ENCODE measurements at regions of chrX and their contacts with region 1.

Region 1: GRCh38 chrX:120250522-120251271 is at the start of gene ZBTB33:
- DNase-seq: peak; percentile 92
- ATAC-seq: peak; percentile 99
- H3K4me3 Mint-ChIP-seq: peak within 1 kb of the TSS; percentile 94
- H3K27ac Mint-ChIP-seq: peak within 1 kb of the TSS; percentile 92
- H3K4me1 Mint-ChIP-seq: peaks cover 22% of the 10 kb centered on the region
- H3K27me3 Mint-ChIP-seq: no peaks in the 10 kb centered on the region
- total RNA-seq, gene ZBTB33: 14.5 to 14.6 TPM

Region 2: GRCh38 chrX:120015145-120016067 is 235.3 kb before region 1 on chrX:
- CTCF ChIA-PET with region 1: no interaction called
- POLR2A ChIA-PET with region 1: no interaction called
- intact Hi-C with region 1: no loop called
- DNase-seq: peak; percentile 5
- ATAC-seq: no peak
- H3K4me3 Mint-ChIP-seq: peak overlapping the region; percentile 56
- H3K27ac Mint-ChIP-seq: no peak overlapping the region
- H3K4me1 Mint-ChIP-seq: peaks cover 11% of the 10 kb centered on the region
- H3K27me3 Mint-ChIP-seq: peaks cover 26% of the 10 kb centered on the region

Region 3: DNA sequence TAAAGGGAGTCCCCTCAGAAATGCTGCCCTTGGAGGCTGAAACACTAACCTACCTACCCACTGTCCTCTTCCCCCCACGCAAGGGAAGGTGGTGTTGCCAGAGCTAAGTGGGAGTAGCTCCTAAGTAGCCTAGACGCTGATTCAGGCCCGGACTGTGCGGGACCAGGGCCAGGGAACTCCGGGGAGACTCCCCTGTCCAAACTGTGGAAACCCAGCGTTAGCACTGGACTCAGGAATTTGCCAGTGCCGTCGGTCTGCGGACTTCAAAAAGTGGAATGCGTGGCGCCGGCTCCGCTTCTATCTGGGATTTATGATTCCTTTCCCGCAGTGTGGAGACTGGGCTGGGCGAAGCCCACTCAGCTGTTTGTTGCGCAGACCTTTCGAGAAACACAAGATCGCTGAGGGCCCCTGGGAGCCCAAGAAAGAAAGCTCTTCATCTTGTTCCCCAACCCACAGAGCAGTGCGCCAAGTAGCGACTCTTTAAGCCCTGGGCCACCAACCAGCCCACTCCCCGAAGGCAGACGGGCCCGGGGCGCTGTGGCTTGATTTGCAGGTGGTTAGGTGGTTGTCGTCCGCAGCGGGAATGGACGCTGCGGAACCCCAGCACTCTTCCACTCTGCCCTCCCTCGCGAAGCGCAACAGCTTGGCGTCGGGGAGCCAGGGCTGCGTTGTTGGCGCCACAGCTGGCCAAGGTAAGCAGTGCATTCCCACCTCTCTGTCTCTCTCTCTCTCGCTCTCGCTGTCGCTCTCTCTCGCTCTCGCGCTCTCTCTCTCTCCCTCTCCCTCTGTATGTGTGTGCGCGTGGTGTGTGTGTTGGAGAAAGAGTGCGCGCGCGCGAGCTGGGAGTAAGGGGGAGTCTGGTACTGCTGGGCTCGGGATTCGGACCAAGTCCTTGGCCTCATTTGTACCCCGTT is 58.5 kb after region 1 on chrX:
- CTCF ChIA-PET with region 1: interaction called, 7 read pairs
- POLR2A ChIA-PET with region 1: no interaction called
- intact Hi-C with region 1: loop called (anchors 1 to 2 kb)
- DNase-seq: peak; percentile 81
- ATAC-seq: peak; percentile 94
- H3K4me3 Mint-ChIP-seq: peak overlapping the region; percentile 77
- H3K27ac Mint-ChIP-seq: peak overlapping the region; percentile 42
- H3K4me1 Mint-ChIP-seq: peaks cover 17% of the 10 kb centered on the region
- H3K27me3 Mint-ChIP-seq: peaks cover 16% of the 10 kb centered on the region

Measured in activated CD4-positive, alpha-beta T cell treated with anti-CD3 and anti-CD28 coated beads for 36 hours (primary cell).